ENCODE measurements at regions of chr2 and their contacts with region 1.

Region 1: GRCh38 chr2:30072250-30072842 is 74.5 kb upstream of the YPEL5 start:
- DNase-seq: peak; percentile 72
- H3K4me3 ChIP-seq: no peak overlapping the region
- H3K27ac ChIP-seq: no peak overlapping the region
- H3K4me1 ChIP-seq: no peaks in the 10 kb centered on the region
- H3K27me3 ChIP-seq: peaks cover 0 to 7% (median 7%) of the 10 kb centered on the region in 3 donors
- CTCF ChIP-seq: peak; percentile 39 to 61 (median 44)
- EP300 ChIP-seq: no peak
- POLR2A ChIP-seq: no peak

Region 2: DNA sequence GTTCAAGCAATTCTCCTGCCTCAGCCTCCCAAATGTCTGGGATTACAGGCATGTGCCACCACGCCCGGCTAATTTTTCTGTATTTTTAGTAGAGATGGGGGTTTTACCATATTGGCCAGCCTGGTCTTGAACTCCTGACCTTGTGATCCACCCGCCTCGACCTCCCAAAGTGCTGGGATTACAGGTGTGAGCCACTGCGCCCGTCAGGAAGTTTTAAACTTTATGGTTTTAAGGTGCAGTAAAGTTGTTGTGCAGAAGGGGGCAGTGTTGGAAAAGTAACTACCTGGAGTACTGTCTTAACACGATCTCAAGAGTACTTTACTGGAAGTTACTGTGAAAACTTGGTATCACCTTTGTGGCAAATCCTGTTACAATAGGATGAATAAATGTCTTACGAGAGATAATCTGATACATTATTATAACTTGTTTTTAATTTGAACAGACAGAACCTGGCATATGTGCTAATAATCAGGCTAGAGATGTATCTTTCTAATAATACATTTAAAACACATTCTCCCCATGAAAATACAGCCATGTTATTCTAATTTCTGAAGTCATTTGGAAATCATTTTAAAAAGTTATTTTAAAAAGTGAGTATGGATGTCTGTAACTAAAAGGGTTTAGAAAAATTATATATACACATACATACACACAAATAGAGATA is 1250.9 kb before region 1 on chr2:
- intact Hi-C with region 1: loop called (anchors 10 kb)
- DNase-seq: no peak
- H3K4me3 ChIP-seq: no peak overlapping the region
- H3K27ac ChIP-seq: no peak overlapping the region
- H3K4me1 ChIP-seq: no peaks in the 10 kb centered on the region
- H3K27me3 ChIP-seq: no peaks in the 10 kb centered on the region
- CTCF ChIP-seq: peak; percentile 42 to 63 (median 54)
- EP300 ChIP-seq: no peak
- POLR2A ChIP-seq: no peak

Region 3: DNA sequence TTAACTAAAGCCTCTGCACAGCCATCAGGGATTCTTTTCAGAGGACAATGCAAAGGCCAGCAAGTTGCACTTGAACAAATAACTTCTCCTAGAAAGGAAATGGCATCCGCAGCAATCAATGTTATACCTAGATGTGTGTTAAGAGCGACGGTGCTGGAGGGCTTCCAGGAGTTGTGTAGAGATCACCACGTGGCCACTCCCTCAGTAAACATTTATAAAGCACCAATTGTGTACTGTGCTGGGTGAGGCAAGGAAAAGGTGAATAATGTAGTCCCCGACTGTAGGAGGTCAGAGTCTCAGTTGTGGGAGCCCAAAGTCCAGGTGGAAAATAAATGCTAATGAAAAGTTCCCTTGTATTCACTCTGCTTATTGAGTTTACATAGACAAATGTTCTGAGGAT is 286.0 kb before region 1 on chr2:
- intact Hi-C with region 1: no loop called
- DNase-seq: no peak
- H3K4me3 ChIP-seq: no peak overlapping the region
- H3K27ac ChIP-seq: no peak overlapping the region
- H3K4me1 ChIP-seq: no peaks in the 10 kb centered on the region
- H3K27me3 ChIP-seq: no peaks in the 10 kb centered on the region
- CTCF ChIP-seq: no peak
- EP300 ChIP-seq: no peak
- POLR2A ChIP-seq: no peak

Region 4: DNA sequence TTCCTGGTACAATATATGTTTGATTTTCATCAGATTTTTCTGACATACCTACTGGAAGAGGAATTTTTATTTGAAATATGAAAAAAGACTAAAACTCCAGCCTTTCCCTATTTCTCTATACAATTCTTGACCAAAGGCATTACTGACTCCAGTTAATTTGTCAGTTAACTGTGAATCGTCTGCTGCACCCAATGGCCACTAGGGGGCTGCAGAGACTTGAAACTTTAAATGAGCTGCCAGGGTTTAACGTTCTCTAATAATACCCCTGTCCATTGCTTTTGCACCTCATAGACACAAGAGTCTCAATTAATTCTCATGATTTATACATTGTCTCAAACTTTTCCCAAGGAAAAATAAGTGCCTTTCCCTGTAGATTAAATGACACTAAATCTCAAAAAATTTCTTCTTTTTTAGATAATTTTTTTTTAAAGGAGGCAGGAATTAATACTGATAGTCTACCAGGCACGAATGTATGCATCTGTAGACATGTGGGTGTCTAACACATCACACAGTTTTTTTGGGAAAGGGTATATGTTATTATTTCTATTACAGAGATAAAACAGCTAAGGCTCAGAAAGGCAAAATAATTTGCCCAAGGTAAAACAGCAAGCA is 149.1 kb before region 1 on chr2:
- intact Hi-C with region 1: loop called (anchors 2 kb)
- DNase-seq: peak; percentile 70
- H3K4me3 ChIP-seq: no peak overlapping the region
- H3K27ac ChIP-seq: no peak overlapping the region
- H3K4me1 ChIP-seq: peaks cover 0 to 32% (median 24%) of the 10 kb centered on the region in 4 donors
- H3K27me3 ChIP-seq: peaks cover 0 to 54% (median 42%) of the 10 kb centered on the region in 3 donors
- CTCF ChIP-seq: peak; percentile 21 to 89 (median 64)
- EP300 ChIP-seq: no peak
- POLR2A ChIP-seq: no peak